Right ventricle myocardium superior (tissue), 1 donor: ENCODE measurements at regions of chr11 and their contacts with region 1.

Region 1: DNA sequence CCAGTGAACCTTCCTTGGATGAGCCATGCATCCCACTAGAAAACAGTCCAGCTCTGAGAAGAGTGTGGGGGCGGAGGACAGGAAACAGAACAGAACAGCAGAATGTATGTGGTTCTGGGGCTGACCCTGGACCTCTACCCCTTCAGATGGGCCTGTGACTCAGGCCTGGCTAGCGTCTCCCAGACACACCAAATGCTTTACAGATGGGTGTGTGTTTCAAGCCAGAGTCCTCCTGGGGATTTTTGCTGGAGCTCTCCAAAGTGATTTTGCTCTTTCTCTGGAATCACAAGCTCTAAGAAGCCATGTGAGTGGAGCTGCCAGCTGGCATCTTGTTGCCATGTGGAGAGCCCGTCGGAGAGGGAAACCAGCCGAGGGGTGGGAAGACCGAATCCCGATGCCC is 13.2 kb upstream of the C1QTNF4 start:
- DNase-seq: peak; percentile 70
- ATAC-seq: peak; percentile 56

Region 2: DNA sequence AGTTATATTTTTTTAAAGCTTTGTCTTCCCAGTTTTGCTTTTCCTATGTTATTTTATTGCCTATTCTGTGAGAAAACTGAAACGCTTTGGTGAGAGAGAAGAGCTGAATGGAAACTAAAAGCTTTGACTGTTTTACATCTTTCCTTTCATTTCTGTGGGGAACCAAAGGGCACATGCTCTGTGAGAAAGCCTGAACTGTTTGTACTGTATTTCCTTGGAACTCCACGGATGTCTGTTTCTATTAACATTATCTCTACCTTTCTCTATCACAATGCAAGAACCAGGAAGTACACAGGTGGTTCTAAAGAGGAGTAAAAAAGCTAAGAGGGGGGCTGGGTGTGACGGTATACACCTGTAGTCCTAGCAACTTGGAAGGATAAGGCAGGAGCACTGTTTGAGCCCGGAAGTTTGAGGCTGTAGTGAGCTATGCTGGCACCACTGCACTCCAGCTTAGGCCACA is 98.3 kb before region 1 on chr11:
- intact Hi-C with region 1: loop called (anchors 10 kb)
- DNase-seq: no peak
- ATAC-seq: no peak